Mammary epithelial cell (primary cell): ENCODE measurements at regions of chr10 and their contacts with region 1.

Region 1: DNA sequence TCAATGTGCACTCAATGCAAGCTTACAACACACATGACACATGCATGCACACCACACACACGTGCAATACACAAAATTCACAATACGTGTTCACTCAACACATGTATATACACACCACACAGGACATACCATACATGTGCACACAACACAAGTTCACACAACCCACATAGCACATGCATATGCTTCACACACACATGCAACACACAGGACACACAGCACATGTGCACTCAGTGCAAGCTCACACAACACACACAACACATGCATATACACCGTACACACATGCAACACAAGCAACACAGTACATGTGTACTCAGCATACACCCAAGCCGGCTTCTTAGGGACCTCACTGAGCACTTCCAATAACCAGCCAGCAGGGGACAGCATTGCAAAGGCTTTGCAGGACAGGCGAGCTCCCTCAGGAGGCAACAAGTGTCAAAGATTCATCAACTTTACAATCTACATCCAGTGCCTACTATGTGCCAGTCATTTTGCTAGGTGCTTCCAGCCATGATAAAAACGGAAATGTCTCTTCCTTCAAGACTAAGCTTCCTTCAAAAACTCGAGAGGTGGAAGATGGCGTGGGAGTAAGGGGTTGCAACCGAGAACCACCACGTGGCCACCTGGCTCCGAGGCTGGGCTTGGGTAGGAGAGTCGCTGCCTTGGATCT is 61.1 kb downstream of the JCAD start:
- DNase-seq: peak; percentile 68
- H3K4me3 ChIP-seq: no peak overlapping the region
- H3K27ac ChIP-seq: no peak overlapping the region
- H3K4me1 ChIP-seq: no peaks in the 10 kb centered on the region
- H3K27me3 ChIP-seq: no peaks in the 10 kb centered on the region
- CTCF ChIP-seq: peak; percentile 100

Region 2: GRCh38 chr10:29535012-29535777 is 463.1 kb before region 1 on chr10:
- CTCF ChIA-PET with region 1: no interaction called
- dilution Hi-C with region 1: no loop called
- in situ Hi-C with region 1: no loop called
- intact Hi-C with region 1: loop called (anchors 5 kb)
- DNase-seq: peak; percentile 83
- H3K4me3 ChIP-seq: peak overlapping the region in 2 of 3 experiments; percentile 11 to 19
- H3K27ac ChIP-seq: peak overlapping the region; percentile 70
- H3K4me1 ChIP-seq: peaks cover 25% of the 10 kb centered on the region
- H3K27me3 ChIP-seq: no peaks in the 10 kb centered on the region
- CTCF ChIP-seq: peak; percentile 81 to 89

Region 3: DNA sequence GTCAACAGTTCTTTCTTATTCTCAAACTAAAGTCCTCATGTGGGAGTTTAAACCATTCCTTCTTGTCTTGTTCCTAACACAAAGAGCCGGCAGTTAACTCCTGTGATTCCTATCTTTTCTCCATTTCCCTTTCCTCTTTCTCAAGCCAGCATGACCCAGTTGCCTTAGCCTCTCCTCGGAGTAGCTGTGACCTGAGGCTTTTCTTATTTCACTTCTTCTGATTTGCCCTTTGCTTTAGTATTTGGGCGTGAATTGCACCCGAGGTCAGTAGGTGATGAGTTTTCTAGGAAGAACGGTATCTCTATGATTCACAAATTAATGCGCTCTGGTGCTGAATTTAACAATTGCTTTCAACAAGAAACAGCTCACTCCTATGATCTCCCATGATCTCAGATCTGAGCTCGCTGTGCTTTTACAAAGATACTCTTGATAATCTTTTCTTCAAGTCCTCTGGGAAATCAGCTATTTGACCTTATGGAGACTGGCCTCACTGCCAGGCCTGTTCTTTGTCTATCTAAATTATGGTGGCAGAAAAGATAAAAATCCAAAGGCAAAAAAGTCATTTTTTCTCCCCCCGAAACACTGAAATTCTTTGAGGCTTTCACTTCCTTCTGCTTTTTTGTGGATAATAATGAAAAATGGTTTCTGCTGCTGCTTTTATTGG is 123.5 kb before region 1 on chr10:
- CTCF ChIA-PET with region 1: no interaction called
- dilution Hi-C with region 1: no loop called
- in situ Hi-C with region 1: no loop called
- intact Hi-C with region 1: no loop called
- DNase-seq: no peak
- H3K4me3 ChIP-seq: no peak overlapping the region
- H3K27ac ChIP-seq: no peak overlapping the region
- H3K4me1 ChIP-seq: peaks cover 4% of the 10 kb centered on the region
- H3K27me3 ChIP-seq: no peaks in the 10 kb centered on the region
- CTCF ChIP-seq: no peak

Region 4: GRCh38 chr10:29926693-29927048 is 71.6 kb before region 1 on chr10:
- CTCF ChIA-PET with region 1: no interaction called
- dilution Hi-C with region 1: no loop called
- in situ Hi-C with region 1: loop called (anchors 5 to 10 kb)
- intact Hi-C with region 1: loop called (anchors 1 kb)
- DNase-seq: peak; percentile 54
- H3K4me3 ChIP-seq: no peak overlapping the region
- H3K27ac ChIP-seq: no peak overlapping the region
- H3K4me1 ChIP-seq: peaks cover 19% of the 10 kb centered on the region
- H3K27me3 ChIP-seq: no peaks in the 10 kb centered on the region
- CTCF ChIP-seq: peak; percentile 87 to 91

Region 5: DNA sequence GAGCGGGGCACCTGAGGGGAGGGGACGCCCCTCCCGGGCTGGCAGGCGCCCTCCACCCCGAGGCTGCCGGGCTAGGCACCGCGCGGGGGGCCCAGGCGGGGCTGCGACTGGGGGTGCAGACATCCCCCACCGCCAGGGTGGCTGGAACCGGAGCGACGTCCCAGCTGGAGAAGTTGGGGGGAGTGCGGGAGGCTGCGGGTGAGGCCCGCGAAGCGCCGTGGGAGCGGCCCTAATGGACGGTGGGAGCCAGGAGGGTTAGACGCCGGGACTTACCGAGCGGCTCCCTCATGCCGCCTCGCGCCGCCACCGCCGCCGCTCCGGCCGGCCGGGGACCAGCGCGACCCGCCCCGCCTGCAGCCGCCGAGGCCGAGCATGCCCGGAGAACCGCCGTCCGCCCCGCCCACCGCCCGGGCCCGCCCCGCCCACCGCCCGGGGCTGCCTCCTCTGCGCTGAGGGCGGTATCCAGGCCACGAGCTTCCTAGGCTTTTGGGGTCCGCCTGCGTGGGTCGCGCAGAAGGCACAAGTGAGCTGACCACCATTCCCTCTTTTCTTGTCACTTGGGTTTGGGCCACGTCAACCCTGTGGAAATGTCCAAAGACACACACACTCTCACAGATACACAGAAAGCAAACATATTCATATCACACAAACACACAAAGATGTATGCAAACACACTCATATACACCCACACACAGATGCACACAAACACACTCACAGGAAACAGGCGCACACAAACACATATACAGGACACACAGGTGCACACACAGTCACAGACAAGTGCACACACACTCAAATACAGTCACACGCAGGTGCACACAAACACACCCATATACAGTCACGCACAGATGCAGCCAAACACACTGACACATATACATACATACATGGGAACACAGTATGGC is 61.2 kb after region 1 on chr10 and contains the start of gene JCAD:
- CTCF ChIA-PET with region 1: no interaction called
- dilution Hi-C with region 1: no loop called
- in situ Hi-C with region 1: no loop called
- intact Hi-C with region 1: no loop called
- DNase-seq: peak; percentile 15
- H3K4me3 ChIP-seq: peak within 1 kb of the TSS; percentile 51 to 61 (median 54)
- H3K27ac ChIP-seq: no peak within 1 kb of the TSS
- H3K4me1 ChIP-seq: peaks cover 7% of the 10 kb centered on the region
- H3K27me3 ChIP-seq: peaks cover 5% of the 10 kb centered on the region
- CTCF ChIP-seq: no peak
- total RNA-seq, gene JCAD: 0.17 to 0.21 TPM

Region 6: DNA sequence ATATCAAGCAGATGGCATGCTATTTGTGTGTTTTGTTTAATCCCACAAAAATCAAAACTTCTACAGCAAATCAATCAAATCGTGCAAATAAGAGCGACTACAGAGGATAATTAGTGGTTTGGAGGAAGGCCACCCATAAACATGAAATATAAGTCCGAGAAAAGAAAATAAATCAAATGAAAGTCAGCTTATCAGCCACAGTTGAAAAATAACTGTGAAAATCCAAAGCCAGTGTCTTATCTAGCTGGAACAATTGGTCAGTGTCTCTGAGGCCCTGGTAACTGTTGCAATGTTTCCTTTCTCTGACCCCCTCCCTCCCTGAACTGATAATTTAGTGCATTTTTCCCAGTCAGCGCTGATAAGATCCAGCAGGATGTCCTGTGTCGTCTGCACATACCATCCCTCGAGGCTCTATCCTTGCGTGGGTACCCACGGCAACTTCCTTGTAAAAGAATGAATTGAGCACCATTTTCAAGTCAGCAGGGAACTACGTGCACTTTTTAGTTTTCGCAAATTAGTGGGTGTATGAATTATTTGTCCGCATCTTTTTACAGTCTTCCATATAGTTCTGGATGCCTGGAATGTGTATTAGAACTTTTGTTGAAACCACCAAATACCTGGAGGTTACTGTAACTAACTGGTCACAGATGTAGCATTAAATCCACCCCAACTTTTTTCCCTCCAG is 71.9 kb after region 1 on chr10:
- CTCF ChIA-PET with region 1: no interaction called
- dilution Hi-C with region 1: no loop called
- in situ Hi-C with region 1: no loop called
- intact Hi-C with region 1: no loop called
- DNase-seq: no peak
- H3K4me3 ChIP-seq: no peak overlapping the region
- H3K27ac ChIP-seq: no peak overlapping the region
- H3K4me1 ChIP-seq: no peaks in the 10 kb centered on the region
- H3K27me3 ChIP-seq: no peaks in the 10 kb centered on the region
- CTCF ChIP-seq: no peak

Region 7: GRCh38 chr10:30127120-30127541 is 128.9 kb after region 1 on chr10:
- CTCF ChIA-PET with region 1: no interaction called
- dilution Hi-C with region 1: no loop called
- in situ Hi-C with region 1: no loop called
- intact Hi-C with region 1: no loop called
- DNase-seq: no peak
- H3K4me3 ChIP-seq: no peak overlapping the region
- H3K27ac ChIP-seq: no peak overlapping the region
- H3K4me1 ChIP-seq: no peaks in the 10 kb centered on the region
- H3K27me3 ChIP-seq: no peaks in the 10 kb centered on the region
- CTCF ChIP-seq: no peak

Region 8: DNA sequence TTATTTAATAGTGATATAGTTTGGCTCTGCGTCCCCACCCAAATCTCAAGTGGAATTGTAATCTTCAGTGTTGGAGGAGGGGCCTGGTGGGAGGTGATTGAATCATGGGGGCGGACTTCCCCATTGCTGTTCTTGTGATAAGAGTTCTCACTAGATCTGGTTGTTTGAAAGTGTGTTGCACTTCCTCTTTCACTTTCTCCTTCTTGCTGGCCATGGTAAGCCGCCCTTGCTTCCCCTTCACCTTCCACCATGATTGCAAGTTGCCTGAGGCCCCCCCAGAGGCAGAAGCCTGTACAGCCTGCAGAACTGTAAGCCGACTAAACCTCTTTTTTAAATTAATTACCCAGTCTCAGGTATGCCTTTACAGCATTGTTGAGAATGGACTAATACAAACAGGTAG is 249.4 kb after region 1 on chr10:
- CTCF ChIA-PET with region 1: interaction called, 5 read pairs
- dilution Hi-C with region 1: no loop called
- in situ Hi-C with region 1: loop called (anchors 10 to 25 kb)
- intact Hi-C with region 1: no loop called
- DNase-seq: no peak
- H3K4me3 ChIP-seq: no peak overlapping the region
- H3K27ac ChIP-seq: no peak overlapping the region
- H3K4me1 ChIP-seq: no peaks in the 10 kb centered on the region
- H3K27me3 ChIP-seq: peaks cover 3% of the 10 kb centered on the region
- CTCF ChIP-seq: no peak

Region 9: GRCh38 chr10:30591249-30591670 is 593.0 kb after region 1 on chr10:
- CTCF ChIA-PET with region 1: no interaction called
- dilution Hi-C with region 1: no loop called
- in situ Hi-C with region 1: no loop called
- intact Hi-C with region 1: loop called (anchors 10 kb)
- DNase-seq: peak; percentile 42
- H3K4me3 ChIP-seq: no peak overlapping the region
- H3K27ac ChIP-seq: no peak overlapping the region
- H3K4me1 ChIP-seq: no peaks in the 10 kb centered on the region
- H3K27me3 ChIP-seq: peaks cover 5% of the 10 kb centered on the region
- CTCF ChIP-seq: peak; percentile 63 to 70